GM12878 (cell line): ENCODE measurements at regions of chr11 and their contacts with region 1.

Region 1: GRCh38 chr11:77473801-77474683 is at the start of gene PAK1:
- DNase-seq: no peak
- ATAC-seq: peak; percentile 86
- H3K4me3 ChIP-seq: peak within 1 kb of the TSS; percentile 92
- H3K27ac ChIP-seq: peak within 1 kb of the TSS; percentile 82
- H3K4me1 ChIP-seq: peaks cover 14% of the 10 kb centered on the region
- H3K27me3 ChIP-seq: no peaks in the 10 kb centered on the region
- CTCF ChIP-seq: peak; percentile 16 to 38 (median 36); a peak in 4 of 6 replicates
- EP300 ChIP-seq: peak; percentile 35 to 53; a peak in 2 of 4 replicates
- POLR2A ChIP-seq: peak; percentile 64
- RAD21 ChIP-seq: 0 out of 2 replicates have a peak, but pooled peaks have one; percentile 2
- polyA plus RNA-seq, gene PAK1: 43.8 to 49.4 TPM

Region 2: DNA sequence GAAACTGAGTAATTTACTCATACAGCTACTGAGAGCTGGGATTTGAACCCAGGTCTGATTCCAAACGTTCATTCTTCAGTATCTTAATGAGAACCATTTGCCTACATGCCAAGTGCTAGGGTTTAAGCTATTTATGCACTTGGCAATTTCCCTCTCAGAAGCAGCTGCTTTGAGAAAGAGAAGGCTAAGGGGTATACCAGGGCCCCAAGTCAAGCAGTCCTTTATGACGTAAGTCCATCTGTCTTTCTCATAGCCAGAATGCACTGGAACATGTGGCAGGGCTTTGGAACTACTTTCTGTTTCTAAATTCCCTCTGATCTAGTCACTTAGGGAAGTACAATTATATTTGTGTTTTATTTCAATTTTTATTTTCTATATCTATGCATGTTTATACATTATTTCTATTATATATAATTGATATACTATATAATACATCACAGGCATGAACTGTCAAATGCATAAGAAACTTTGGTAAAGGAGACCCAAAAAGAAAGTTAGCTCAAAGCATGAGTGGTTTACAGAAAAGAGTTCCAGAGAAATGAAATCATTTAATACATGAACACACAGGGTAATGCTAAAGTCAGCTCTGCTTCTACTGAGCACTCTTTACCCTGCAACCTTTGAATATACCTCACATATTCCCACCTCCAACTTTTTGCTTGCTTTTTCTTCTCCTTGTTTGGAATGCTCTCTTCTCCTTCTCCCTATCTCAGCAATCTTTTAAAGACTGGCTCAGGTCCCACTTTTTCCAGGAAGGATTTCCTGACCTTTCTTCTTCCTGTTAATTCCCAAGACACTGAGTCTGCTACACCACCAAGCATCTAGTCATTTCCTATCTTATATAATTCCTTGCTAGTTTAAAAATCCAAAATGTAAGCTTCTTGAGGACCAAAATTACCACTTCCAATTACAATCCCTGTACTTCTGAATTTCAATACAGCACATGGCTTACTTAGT is 92.0 kb before region 1 on chr11:
- CTCF ChIA-PET with region 1: interaction called, 4 read pairs
- POLR2A ChIA-PET with region 1: interaction called, 5 read pairs
- RAD21 ChIA-PET with region 1: interaction called, 4 read pairs
- SMC1A ChIA-PET with region 1: interaction called, 19 read pairs
- in situ Hi-C with region 1: no loop called
- intact Hi-C with region 1: no loop called
- DNase-seq: no peak
- ATAC-seq: no peak; the same call in 2 of the 3 replicates
- H3K4me3 ChIP-seq: no peak overlapping the region
- H3K27ac ChIP-seq: no peak overlapping the region
- H3K4me1 ChIP-seq: no peaks in the 10 kb centered on the region
- H3K27me3 ChIP-seq: no peaks in the 10 kb centered on the region
- CTCF ChIP-seq: no peak
- EP300 ChIP-seq: no peak
- POLR2A ChIP-seq: no peak
- RAD21 ChIP-seq: no peak

Region 3: DNA sequence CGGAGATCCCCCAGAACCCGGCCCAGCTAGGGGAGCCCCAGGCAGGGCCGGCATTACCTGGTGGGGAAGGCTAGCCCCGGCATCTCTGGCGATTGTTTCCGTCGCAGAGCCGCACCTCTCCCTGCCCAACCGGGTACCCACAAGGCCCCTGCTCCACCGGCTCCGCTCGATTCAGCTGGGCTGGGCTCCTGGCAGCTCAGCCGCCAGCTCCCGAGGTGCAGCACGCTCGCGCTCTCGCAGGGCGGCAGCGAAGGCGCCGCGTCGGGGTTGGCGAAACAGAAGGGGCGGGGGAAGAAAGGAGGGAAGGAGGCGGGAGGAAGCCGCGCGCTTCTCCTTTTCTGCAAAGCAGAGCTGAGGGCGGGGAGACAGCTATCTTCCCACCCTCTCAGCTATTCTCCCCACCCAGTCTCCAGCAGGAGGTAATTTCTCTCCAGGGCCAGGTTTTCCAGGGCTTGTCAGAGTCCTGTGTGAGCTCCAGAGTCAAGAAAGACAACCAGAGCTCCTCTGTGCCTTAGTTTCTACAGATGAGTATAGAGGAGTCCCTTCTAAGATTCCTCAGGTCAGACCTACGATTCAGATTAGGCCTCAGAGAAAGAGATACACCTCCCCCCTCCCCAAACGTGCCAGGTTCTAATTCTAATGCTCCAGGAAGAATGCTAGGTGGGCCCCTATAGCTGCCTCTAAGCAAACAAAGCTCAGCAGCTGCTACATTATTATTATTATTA is 62.2 kb before region 1 on chr11:
- CTCF ChIA-PET with region 1: interaction called, 47 read pairs
- POLR2A ChIA-PET with region 1: interaction called, 29 read pairs
- RAD21 ChIA-PET with region 1: interaction called, 83 read pairs
- SMC1A ChIA-PET with region 1: interaction called, 98 read pairs
- in situ Hi-C with region 1: no loop called
- intact Hi-C with region 1: loop called (anchors 2 kb)
- DNase-seq: peak; percentile 40
- ATAC-seq: peak; percentile 93
- H3K4me3 ChIP-seq: peak overlapping the region; percentile 93
- H3K27ac ChIP-seq: peak overlapping the region; percentile 79
- H3K4me1 ChIP-seq: peaks cover 8% of the 10 kb centered on the region
- H3K27me3 ChIP-seq: no peaks in the 10 kb centered on the region
- CTCF ChIP-seq: peak; percentile 8 to 29 (median 19); a peak in 3 of 6 replicates
- EP300 ChIP-seq: no peak
- POLR2A ChIP-seq: peak; percentile 87
- RAD21 ChIP-seq: peak; percentile 44

Region 4: GRCh38 chr11:77435972-77436371 is 38.1 kb before region 1 on chr11:
- CTCF ChIA-PET with region 1: interaction called, 22 read pairs
- POLR2A ChIA-PET with region 1: interaction called, 17 read pairs
- RAD21 ChIA-PET with region 1: interaction called, 18 read pairs
- SMC1A ChIA-PET with region 1: interaction called, 27 read pairs
- in situ Hi-C with region 1: no loop called
- intact Hi-C with region 1: no loop called
- DNase-seq: no peak
- ATAC-seq: peak; percentile 55
- H3K4me3 ChIP-seq: peak overlapping the region; percentile 50; the same call in 1 of the 2 replicates
- H3K27ac ChIP-seq: peak overlapping the region; percentile 35; the same call in 1 of the 2 replicates
- H3K4me1 ChIP-seq: peaks cover 33% of the 10 kb centered on the region; the same call in 1 of the 2 replicates
- H3K27me3 ChIP-seq: no peaks in the 10 kb centered on the region
- CTCF ChIP-seq: no peak
- EP300 ChIP-seq: no peak
- POLR2A ChIP-seq: no peak
- RAD21 ChIP-seq: no peak

Region 5: GRCh38 chr11:77457340-77457739 is 16.7 kb before region 1 on chr11:
- CTCF ChIA-PET with region 1: interaction called, 119 read pairs
- POLR2A ChIA-PET with region 1: interaction called, 100 read pairs
- RAD21 ChIA-PET with region 1: interaction called, 162 read pairs
- SMC1A ChIA-PET with region 1: interaction called, 289 read pairs
- in situ Hi-C with region 1: no loop called
- intact Hi-C with region 1: no loop called
- DNase-seq: no peak
- ATAC-seq: peak; percentile 52
- H3K4me3 ChIP-seq: peak overlapping the region; percentile 55; the same call in 1 of the 2 replicates
- H3K27ac ChIP-seq: peak overlapping the region; percentile 57
- H3K4me1 ChIP-seq: peaks cover 47% of the 10 kb centered on the region
- H3K27me3 ChIP-seq: no peaks in the 10 kb centered on the region
- CTCF ChIP-seq: no peak
- EP300 ChIP-seq: no peak
- POLR2A ChIP-seq: no peak
- RAD21 ChIP-seq: no peak

Region 6: GRCh38 chr11:77580712-77581337 is 106.8 kb after region 1 on chr11:
- CTCF ChIA-PET with region 1: no interaction called
- POLR2A ChIA-PET with region 1: no interaction called
- RAD21 ChIA-PET with region 1: no interaction called
- SMC1A ChIA-PET with region 1: no interaction called
- in situ Hi-C with region 1: no loop called
- intact Hi-C with region 1: no loop called
- DNase-seq: no peak
- ATAC-seq: no peak
- H3K4me3 ChIP-seq: no peak overlapping the region
- H3K27ac ChIP-seq: no peak overlapping the region
- H3K4me1 ChIP-seq: no peaks in the 10 kb centered on the region
- H3K27me3 ChIP-seq: no peaks in the 10 kb centered on the region
- CTCF ChIP-seq: no peak
- EP300 ChIP-seq: no peak
- POLR2A ChIP-seq: no peak
- RAD21 ChIP-seq: no peak

Region 7: DNA sequence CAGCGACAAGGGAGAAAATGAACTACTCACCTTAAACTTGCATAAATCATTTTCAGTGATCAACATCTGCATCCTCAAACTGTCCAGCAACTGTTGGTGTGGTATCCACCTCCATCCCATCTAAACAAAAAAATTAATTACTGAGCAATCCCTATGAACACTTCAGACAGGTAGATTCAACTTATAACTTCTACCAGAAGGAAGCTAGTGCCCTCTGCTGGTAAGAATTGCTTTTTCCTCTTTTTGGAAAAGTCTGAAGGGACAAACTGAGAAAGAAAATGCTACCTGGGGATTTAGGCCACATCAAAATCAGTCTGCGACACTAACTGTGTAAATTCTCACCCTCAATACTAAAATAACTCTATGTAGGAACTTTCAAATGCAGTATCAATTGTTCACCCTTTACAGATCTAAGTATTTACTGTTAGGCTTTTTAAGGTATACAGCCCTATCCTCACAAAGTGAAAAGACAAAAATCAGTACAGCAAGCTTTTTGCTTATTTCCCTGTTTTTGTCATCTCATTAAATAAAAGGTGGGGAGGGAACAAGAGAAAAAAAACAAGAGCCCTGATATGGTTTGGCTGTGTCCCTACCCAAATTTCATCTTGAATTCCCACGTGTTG is 145.6 kb after region 1 on chr11:
- CTCF ChIA-PET with region 1: interaction called, 3 read pairs
- POLR2A ChIA-PET with region 1: no interaction called
- RAD21 ChIA-PET with region 1: no interaction called
- SMC1A ChIA-PET with region 1: interaction called, 4 read pairs
- in situ Hi-C with region 1: no loop called
- intact Hi-C with region 1: loop called (anchors 10 kb)
- DNase-seq: peak; percentile 28
- ATAC-seq: peak; percentile 66
- H3K4me3 ChIP-seq: no peak overlapping the region
- H3K27ac ChIP-seq: no peak overlapping the region
- H3K4me1 ChIP-seq: no peaks in the 10 kb centered on the region
- H3K27me3 ChIP-seq: no peaks in the 10 kb centered on the region
- CTCF ChIP-seq: peak; percentile 66 to 77 (median 67); a peak in 5 of 6 replicates
- EP300 ChIP-seq: no peak
- POLR2A ChIP-seq: no peak
- RAD21 ChIP-seq: peak; percentile 76